SK-N-SH (cell line): ENCODE measurements at regions of chr12 and their contacts with region 1.

Region 1: GRCh38 chr12:68317047-68317667 is 15.0 kb downstream of the MDM1 start:
- DNase-seq: peak; percentile 40
- H3K4me3 ChIP-seq: no peak overlapping the region
- H3K27ac ChIP-seq: no peak overlapping the region
- H3K4me1 ChIP-seq: peaks cover 4 to 7% of the 10 kb centered on the region in 2 experiments; a peak in 2 of 4 replicates
- H3K27me3 ChIP-seq: no peaks in the 10 kb centered on the region
- CTCF ChIP-seq: peak; percentile 80
- EP300 ChIP-seq: no peak
- RAD21 ChIP-seq: peak; percentile 74

Region 2: DNA sequence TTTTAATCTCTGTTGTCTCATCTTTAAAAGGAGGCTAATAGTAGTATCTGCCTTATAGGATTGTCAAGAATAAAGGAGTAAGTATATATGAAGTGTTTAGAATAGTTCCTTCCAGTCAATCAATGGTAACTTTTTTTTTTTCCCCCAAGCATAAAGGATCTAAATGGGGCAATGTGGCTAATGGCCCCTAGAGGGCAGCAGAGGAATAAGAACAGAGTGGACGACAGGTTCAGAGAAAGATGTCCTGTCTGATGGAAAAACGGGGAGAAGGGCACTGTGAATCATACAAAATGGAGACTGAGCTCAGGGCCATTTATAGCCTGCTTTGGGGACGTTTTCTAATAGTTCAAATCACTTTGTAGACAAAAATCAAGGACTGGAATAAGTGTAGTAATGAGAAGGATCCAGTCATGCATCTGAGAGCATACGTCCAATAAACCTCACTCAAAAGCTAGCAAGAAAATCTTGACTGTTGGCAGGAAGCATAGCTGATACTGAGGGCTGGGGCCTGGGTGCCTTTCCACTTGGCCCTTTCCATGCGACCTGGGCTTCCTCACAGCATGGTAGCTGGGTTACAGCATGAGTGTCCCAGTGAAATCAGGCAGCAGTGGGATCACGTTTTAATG is 276.6 kb before region 1 on chr12:
- CTCF ChIA-PET with region 1: interaction called, 19 read pairs
- POLR2A ChIA-PET with region 1: no interaction called
- DNase-seq: peak; percentile 72
- H3K4me3 ChIP-seq: no peak overlapping the region; a peak in 1 of 4 replicates
- H3K27ac ChIP-seq: no peak overlapping the region
- H3K4me1 ChIP-seq: no peaks in the 10 kb centered on the region; a peak in 1 of 4 replicates
- H3K27me3 ChIP-seq: no peaks in the 10 kb centered on the region
- CTCF ChIP-seq: peak; percentile 97
- EP300 ChIP-seq: no peak
- RAD21 ChIP-seq: peak; percentile 91

Region 3: GRCh38 chr12:68231229-68231628 is 85.9 kb before region 1 on chr12:
- CTCF ChIA-PET with region 1: interaction called, 17 read pairs
- POLR2A ChIA-PET with region 1: no interaction called
- DNase-seq: no peak
- H3K4me3 ChIP-seq: no peak overlapping the region
- H3K27ac ChIP-seq: no peak overlapping the region
- H3K4me1 ChIP-seq: no peaks in the 10 kb centered on the region
- H3K27me3 ChIP-seq: no peaks in the 10 kb centered on the region
- CTCF ChIP-seq: no peak
- EP300 ChIP-seq: no peak
- RAD21 ChIP-seq: no peak

Region 4: DNA sequence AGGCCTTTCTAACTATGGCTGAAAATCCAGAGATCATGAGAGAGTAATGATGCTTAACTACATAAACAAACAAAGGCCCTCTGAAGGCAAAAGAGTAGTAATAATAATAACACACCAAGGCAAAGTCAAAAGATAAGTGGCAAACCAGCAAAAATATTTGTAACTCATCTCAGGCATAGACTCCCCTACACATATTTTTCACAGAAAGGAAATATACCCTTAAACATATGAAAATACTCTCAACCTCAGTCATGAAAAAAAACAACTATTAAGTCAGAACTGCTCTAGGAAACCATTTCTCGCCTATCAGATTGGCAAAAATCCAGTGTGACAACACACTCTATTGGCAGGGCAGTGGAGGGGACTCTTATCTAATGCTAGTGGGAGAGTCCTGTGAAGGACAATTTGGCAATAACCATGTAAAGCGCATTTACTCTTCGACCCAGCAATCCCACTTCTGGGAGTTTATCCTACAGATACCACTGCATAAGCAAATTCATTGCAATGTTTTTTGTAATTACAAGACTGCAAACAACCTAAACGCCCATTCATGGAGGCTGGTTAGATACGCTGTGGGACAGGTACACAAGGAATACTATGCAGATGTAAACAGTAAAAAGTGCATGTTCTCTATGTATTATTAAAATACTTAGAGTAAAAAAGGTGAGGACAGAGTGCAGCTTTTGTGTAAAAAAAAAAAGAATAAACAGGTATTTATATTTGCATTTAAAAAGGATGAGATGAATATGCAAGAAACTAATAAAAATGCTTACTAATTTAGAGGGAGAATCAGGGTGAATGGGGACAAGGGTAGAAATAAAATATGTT is 37.7 kb before region 1 on chr12:
- CTCF ChIA-PET with region 1: interaction called, 10 read pairs
- POLR2A ChIA-PET with region 1: no interaction called
- DNase-seq: peak; percentile 57
- H3K4me3 ChIP-seq: no peak overlapping the region
- H3K27ac ChIP-seq: peak overlapping the region; percentile 73 to 81
- H3K4me1 ChIP-seq: peaks cover 7 to 10% of the 10 kb centered on the region in 2 experiments; a peak in 3 of 4 replicates
- H3K27me3 ChIP-seq: no peaks in the 10 kb centered on the region
- CTCF ChIP-seq: no peak
- EP300 ChIP-seq: peak in 1 of 2 experiments; percentile 28; a peak in 1 of 4 replicates
- RAD21 ChIP-seq: no peak

Region 5: GRCh38 chr12:68331869-68332727 is 14.9 kb after region 1 on chr12 and contains the start of gene MDM1:
- CTCF ChIA-PET with region 1: interaction called, 18 read pairs
- POLR2A ChIA-PET with region 1: no interaction called
- DNase-seq: peak; percentile 96
- H3K4me3 ChIP-seq: peak within 1 kb of the TSS; percentile 80 to 91
- H3K27ac ChIP-seq: peak within 1 kb of the TSS; percentile 26 to 72; a peak in 2 of 4 replicates
- H3K4me1 ChIP-seq: peaks cover 7 to 20% of the 10 kb centered on the region in 2 experiments; a peak in 2 of 4 replicates
- H3K27me3 ChIP-seq: no peaks in the 10 kb centered on the region
- CTCF ChIP-seq: no peak
- EP300 ChIP-seq: no peak
- RAD21 ChIP-seq: no peak
- polyA plus RNA-seq, gene MDM1: 7.4 and 11.2 TPM in 2 replicates

Region 6: GRCh38 chr12:68695454-68695853 is 378.3 kb after region 1 on chr12:
- CTCF ChIA-PET with region 1: no interaction called
- POLR2A ChIA-PET with region 1: no interaction called
- DNase-seq: no peak
- H3K4me3 ChIP-seq: no peak overlapping the region
- H3K27ac ChIP-seq: no peak overlapping the region
- H3K4me1 ChIP-seq: no peaks in the 10 kb centered on the region
- H3K27me3 ChIP-seq: no peaks in the 10 kb centered on the region
- CTCF ChIP-seq: no peak
- EP300 ChIP-seq: no peak
- RAD21 ChIP-seq: no peak